CD8-positive, alpha-beta T cell (primary cell): ENCODE measurements at regions of chr14 and their contacts with region 1.

Region 1: DNA sequence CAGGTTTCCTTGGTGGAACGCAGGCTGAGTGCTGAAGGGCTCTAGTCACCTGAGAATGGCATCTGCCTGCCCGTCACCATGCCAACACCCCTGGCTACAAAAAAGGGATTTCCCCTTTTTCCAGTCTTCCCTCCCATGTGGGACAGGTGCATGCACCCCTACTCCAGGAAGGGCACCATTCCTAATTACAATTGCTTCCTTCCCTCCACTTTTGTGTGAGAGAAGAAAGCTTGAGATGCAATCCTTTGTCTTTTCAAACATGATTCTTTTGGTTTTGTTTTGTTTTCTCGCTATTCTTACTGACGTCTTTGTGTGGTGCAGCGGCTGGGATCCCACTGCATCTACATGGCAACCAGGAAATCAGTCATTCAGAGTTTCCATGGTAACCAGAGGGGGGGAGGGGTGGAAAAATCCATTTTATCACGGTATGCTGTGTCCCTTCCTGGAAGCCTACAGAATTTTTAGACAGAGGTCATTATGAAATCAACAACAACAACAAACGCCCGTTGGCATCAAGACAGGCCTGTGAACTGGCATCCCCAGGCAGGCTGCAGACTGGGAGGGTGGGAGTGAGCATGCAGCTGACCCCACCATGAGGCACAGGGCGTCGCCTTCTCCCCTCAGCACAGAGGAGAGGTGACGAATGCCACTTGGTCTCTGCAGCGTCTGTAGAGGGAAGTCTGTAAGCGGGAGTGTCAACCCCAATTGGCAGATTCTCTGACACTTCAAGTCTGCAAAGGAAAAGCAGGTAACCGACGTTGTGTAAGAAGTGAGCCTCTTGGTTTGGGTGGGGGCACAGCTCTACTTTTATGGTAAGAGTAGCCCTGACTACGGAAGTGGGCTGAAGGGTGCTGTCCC is 13.6 kb upstream of the GNG2 start:
- DNase-seq: peak; percentile 68 to 99 (median 85)
- ATAC-seq: peak; percentile 86
- H3K4me3 ChIP-seq: peak overlapping the region; percentile 47 to 53
- H3K4me3 Mint-ChIP-seq: peak overlapping the region; percentile 91
- H3K27ac ChIP-seq: peak overlapping the region; percentile 97 to 100
- H3K27ac Mint-ChIP-seq: peak overlapping the region; percentile 97
- H3K4me1 ChIP-seq: peaks cover 34% of the 10 kb centered on the region
- H3K4me1 Mint-ChIP-seq: peaks cover 64% of the 10 kb centered on the region
- H3K27me3 ChIP-seq: no peaks in the 10 kb centered on the region
- H3K27me3 Mint-ChIP-seq: no peaks in the 10 kb centered on the region
- CTCF ChIP-seq: no peak

Region 2: GRCh38 chr14:49862089-49862673 is 1984.7 kb before region 1 on chr14:
- CTCF ChIA-PET with region 1: no interaction called
- POLR2A ChIA-PET with region 1: no interaction called
- intact Hi-C with region 1: loop called in 1 of 2 experiments (anchors 5 kb)
- DNase-seq: peak; percentile 78 to 93 (median 85)
- ATAC-seq: peak; percentile 32
- H3K4me3 ChIP-seq: peak overlapping the region; percentile 66 to 80
- H3K4me3 Mint-ChIP-seq: no peak overlapping the region
- H3K27ac ChIP-seq: peak overlapping the region; percentile 97 to 98
- H3K27ac Mint-ChIP-seq: no peak overlapping the region
- H3K4me1 ChIP-seq: peaks cover 28% of the 10 kb centered on the region
- H3K4me1 Mint-ChIP-seq: peaks cover 7% of the 10 kb centered on the region
- H3K27me3 ChIP-seq: no peaks in the 10 kb centered on the region
- H3K27me3 Mint-ChIP-seq: no peaks in the 10 kb centered on the region
- CTCF ChIP-seq: peak; percentile 100

Region 3: GRCh38 chr14:51239813-51240803 is 606.8 kb before region 1 on chr14 and contains the start of gene TMX1:
- CTCF ChIA-PET with region 1: no interaction called
- POLR2A ChIA-PET with region 1: no interaction called
- intact Hi-C with region 1: loop called in 1 of 2 experiments (anchors 5 kb)
- DNase-seq: peak; percentile 58 to 94 (median 85)
- ATAC-seq: peak; percentile 93
- H3K4me3 ChIP-seq: peak within 1 kb of the TSS; percentile 76 to 95
- H3K4me3 Mint-ChIP-seq: no peak within 1 kb of the TSS
- H3K27ac ChIP-seq: peak within 1 kb of the TSS; percentile 57 to 77
- H3K27ac Mint-ChIP-seq: no peak within 1 kb of the TSS
- H3K4me1 ChIP-seq: peaks cover 30% of the 10 kb centered on the region
- H3K4me1 Mint-ChIP-seq: peaks cover 24% of the 10 kb centered on the region
- H3K27me3 ChIP-seq: no peaks in the 10 kb centered on the region
- H3K27me3 Mint-ChIP-seq: no peaks in the 10 kb centered on the region
- CTCF ChIP-seq: no peak
- total RNA-seq, gene TMX1: 10.2 to 11.1 TPM

Region 4: DNA sequence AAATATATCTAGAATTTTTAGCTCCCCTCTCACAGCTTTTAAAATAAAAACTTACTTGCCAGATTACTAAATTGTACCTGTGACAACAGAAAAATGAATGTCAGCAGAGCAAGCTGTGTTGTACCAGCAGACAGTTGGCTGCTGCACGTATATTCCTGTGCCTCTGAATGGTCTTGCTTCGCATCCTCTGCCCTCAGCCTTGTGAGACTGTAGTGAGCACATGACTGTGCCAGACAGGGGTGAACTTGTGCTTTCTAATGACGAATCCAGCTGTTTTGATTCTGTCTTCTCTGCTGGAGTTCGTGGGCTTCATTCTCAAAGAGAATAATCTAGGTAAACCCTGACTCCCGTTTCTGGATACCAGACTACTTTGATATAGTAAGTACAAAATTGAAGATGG is 253.5 kb before region 1 on chr14:
- CTCF ChIA-PET with region 1: no interaction called
- POLR2A ChIA-PET with region 1: no interaction called
- intact Hi-C with region 1: no loop called
- DNase-seq: peak in 2 of 9 experiments; percentile 5 to 20
- ATAC-seq: peak; percentile 36
- H3K4me3 ChIP-seq: no peak overlapping the region
- H3K4me3 Mint-ChIP-seq: no peak overlapping the region
- H3K27ac ChIP-seq: no peak overlapping the region
- H3K27ac Mint-ChIP-seq: no peak overlapping the region
- H3K4me1 ChIP-seq: no peaks in the 10 kb centered on the region
- H3K4me1 Mint-ChIP-seq: peaks cover 8% of the 10 kb centered on the region
- H3K27me3 ChIP-seq: no peaks in the 10 kb centered on the region
- H3K27me3 Mint-ChIP-seq: peaks cover 8% of the 10 kb centered on the region
- CTCF ChIP-seq: no peak

Region 5: DNA sequence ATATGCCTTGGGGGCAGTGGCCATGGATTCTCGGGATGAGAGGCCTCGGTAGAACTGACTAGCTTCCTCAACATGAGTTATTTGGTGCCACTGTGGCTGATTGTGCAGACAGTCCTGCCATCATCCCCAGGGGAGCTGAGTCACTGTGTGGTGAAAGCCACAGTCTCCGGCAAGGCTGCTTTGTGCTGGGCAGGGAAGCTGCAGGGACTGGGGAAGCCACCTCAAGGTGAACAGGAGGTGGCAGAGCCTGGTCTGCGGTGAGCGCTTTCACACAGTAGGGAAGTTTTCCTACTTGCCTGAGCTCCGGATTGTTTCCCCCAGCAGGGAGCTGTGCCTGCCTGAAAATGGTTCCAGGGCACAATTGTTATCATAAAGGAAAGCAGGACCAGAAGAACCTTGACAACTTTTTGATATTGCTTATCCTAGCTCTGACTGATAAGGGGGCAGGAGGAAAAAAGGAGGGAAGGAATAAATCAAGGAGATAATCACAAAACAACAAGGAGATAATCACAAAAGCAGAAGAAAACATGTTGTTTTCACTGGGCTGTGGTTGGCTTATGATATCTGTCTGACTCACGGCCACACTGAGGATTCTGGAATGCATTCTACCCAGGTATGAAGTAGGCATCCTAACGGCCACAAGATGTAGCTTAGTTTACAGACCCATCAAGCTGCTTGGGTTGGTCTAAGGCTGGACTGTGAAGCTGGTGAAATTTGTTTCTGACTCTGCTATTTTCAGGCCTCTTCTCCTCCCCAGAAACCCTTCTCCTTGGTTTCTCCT is 18.7 kb before region 1 on chr14:
- CTCF ChIA-PET with region 1: interaction called, 8 read pairs
- POLR2A ChIA-PET with region 1: interaction called, 17 read pairs
- intact Hi-C with region 1: loop called in 1 of 2 experiments (anchors 1 kb)
- DNase-seq: peak; percentile 13 to 81 (median 72)
- ATAC-seq: peak; percentile 97
- H3K4me3 ChIP-seq: no peak overlapping the region
- H3K4me3 Mint-ChIP-seq: no peak overlapping the region
- H3K27ac ChIP-seq: no peak overlapping the region
- H3K27ac Mint-ChIP-seq: no peak overlapping the region
- H3K4me1 ChIP-seq: peaks cover 10% of the 10 kb centered on the region
- H3K4me1 Mint-ChIP-seq: no peaks in the 10 kb centered on the region
- H3K27me3 ChIP-seq: no peaks in the 10 kb centered on the region
- H3K27me3 Mint-ChIP-seq: peaks cover 3% of the 10 kb centered on the region
- CTCF ChIP-seq: no peak

Region 6: DNA sequence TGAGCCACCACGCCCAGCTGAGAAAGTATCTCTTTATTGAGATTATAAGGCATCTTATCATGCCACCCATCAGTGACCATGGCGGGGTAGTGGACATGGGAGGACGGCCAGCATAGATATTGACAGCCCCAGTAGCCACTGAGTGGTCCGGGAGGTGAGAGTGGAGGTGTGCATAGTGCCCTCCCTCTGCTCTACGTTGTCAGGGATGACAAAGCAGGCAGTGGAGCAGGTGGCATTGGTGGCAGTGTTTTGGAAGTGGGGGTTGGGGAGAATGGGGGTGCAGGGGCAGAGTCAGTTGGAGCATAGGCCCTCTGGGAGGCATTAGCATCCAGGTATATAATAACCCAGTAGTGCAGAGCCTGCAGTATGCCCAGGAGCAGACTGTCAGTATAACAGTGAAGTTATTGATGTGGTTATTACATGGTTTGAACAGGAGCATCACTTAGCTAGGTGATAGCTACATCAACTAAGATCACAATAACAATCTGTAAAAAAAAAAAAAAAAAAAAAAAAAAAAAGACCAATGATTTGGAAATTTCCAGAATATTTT is 54.7 kb after region 1 on chr14:
- CTCF ChIA-PET with region 1: interaction called, 3 read pairs
- POLR2A ChIA-PET with region 1: interaction called, 6 read pairs
- intact Hi-C with region 1: loop called in 1 of 2 experiments (anchors 1 kb)
- DNase-seq: peak in 5 of 9 experiments; percentile 14 to 74 (median 50)
- ATAC-seq: peak; percentile 76
- H3K4me3 ChIP-seq: no peak overlapping the region
- H3K4me3 Mint-ChIP-seq: peak overlapping the region; percentile 11
- H3K27ac ChIP-seq: peak overlapping the region in 1 of 2 experiments; percentile 34
- H3K27ac Mint-ChIP-seq: peak overlapping the region; percentile 71
- H3K4me1 ChIP-seq: peaks cover 29% of the 10 kb centered on the region
- H3K4me1 Mint-ChIP-seq: peaks cover 70% of the 10 kb centered on the region
- H3K27me3 ChIP-seq: no peaks in the 10 kb centered on the region
- H3K27me3 Mint-ChIP-seq: no peaks in the 10 kb centered on the region
- CTCF ChIP-seq: no peak

Region 7: GRCh38 chr14:51989293-51990234 is 142.7 kb after region 1 on chr14 and contains the start of gene RTRAF:
- CTCF ChIA-PET with region 1: no interaction called
- POLR2A ChIA-PET with region 1: no interaction called
- intact Hi-C with region 1: loop called (anchors 1 to 2 kb)
- DNase-seq: peak; percentile 77 to 97 (median 91)
- ATAC-seq: peak; percentile 96
- H3K4me3 ChIP-seq: peak within 1 kb of the TSS; percentile 65 to 84
- H3K4me3 Mint-ChIP-seq: peak within 1 kb of the TSS; percentile 94
- H3K27ac ChIP-seq: peak within 1 kb of the TSS; percentile 84 to 85
- H3K27ac Mint-ChIP-seq: peak within 1 kb of the TSS; percentile 94
- H3K4me1 ChIP-seq: peaks cover 15% of the 10 kb centered on the region
- H3K4me1 Mint-ChIP-seq: peaks cover 46% of the 10 kb centered on the region
- H3K27me3 ChIP-seq: no peaks in the 10 kb centered on the region
- H3K27me3 Mint-ChIP-seq: no peaks in the 10 kb centered on the region
- CTCF ChIP-seq: no peak
- total RNA-seq, gene RTRAF: 155 to 161 TPM

Region 8: DNA sequence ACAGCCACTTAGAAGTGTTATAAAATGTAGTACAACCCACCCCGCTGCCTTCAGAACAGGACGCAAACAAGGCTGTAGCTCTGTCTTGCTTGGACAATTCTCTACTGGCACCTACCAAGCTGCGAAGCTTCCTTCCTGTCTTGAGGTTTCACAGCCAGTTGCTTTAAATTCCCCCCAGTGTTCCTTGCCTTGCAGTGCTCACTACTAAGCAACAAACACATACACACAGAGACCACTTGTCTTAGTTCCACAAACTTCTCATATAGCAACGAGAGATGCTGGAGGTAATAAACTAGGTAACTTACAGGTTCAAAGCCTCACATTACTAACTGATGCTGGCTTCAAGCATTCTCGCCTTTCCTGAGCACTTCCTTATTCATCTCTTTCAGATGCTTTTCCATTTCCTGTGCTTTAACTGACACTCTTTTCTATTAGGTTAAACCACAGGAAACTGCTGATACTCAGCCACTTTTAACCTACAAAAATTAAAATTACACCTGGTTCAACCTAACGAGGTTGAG is 329.2 kb after region 1 on chr14:
- CTCF ChIA-PET with region 1: no interaction called
- POLR2A ChIA-PET with region 1: no interaction called
- intact Hi-C with region 1: no loop called
- DNase-seq: peak; percentile 16 to 91 (median 44)
- ATAC-seq: peak; percentile 84
- H3K4me3 ChIP-seq: peak overlapping the region in 1 of 2 experiments; percentile 4
- H3K4me3 Mint-ChIP-seq: peak overlapping the region; percentile 47
- H3K27ac ChIP-seq: peak overlapping the region; percentile 29 to 65
- H3K27ac Mint-ChIP-seq: peak overlapping the region; percentile 81
- H3K4me1 ChIP-seq: peaks cover 35% of the 10 kb centered on the region
- H3K4me1 Mint-ChIP-seq: peaks cover 45% of the 10 kb centered on the region
- H3K27me3 ChIP-seq: no peaks in the 10 kb centered on the region
- H3K27me3 Mint-ChIP-seq: no peaks in the 10 kb centered on the region
- CTCF ChIP-seq: no peak

Region 9: GRCh38 chr14:53152890-53153701 is 1306.2 kb after region 1 on chr14 and contains the start of gene DDHD1:
- CTCF ChIA-PET with region 1: no interaction called
- POLR2A ChIA-PET with region 1: no interaction called
- intact Hi-C with region 1: loop called in 1 of 2 experiments (anchors 10 kb)
- DNase-seq: peak; percentile 73 to 93 (median 85)
- ATAC-seq: peak; percentile 85
- H3K4me3 ChIP-seq: peak within 1 kb of the TSS; percentile 86 to 93
- H3K4me3 Mint-ChIP-seq: peak within 1 kb of the TSS; percentile 99
- H3K27ac ChIP-seq: peak within 1 kb of the TSS; percentile 77 to 85
- H3K27ac Mint-ChIP-seq: peak within 1 kb of the TSS; percentile 99
- H3K4me1 ChIP-seq: peaks cover 33% of the 10 kb centered on the region
- H3K4me1 Mint-ChIP-seq: peaks cover 49% of the 10 kb centered on the region
- H3K27me3 ChIP-seq: no peaks in the 10 kb centered on the region
- H3K27me3 Mint-ChIP-seq: no peaks in the 10 kb centered on the region
- CTCF ChIP-seq: no peak
- total RNA-seq, gene DDHD1: 40.1 to 44.3 TPM